Stomach (tissue), 19 donors: ENCODE measurements at regions of chr10 and their contacts with region 1.

Region 1: GRCh38 chr10:28663576-28664313 is 13.6 kb upstream of the BAMBI start:
- DNase-seq: peak; percentile 77 to 94
- H3K4me3 ChIP-seq: no peak overlapping the region
- H3K27ac ChIP-seq: no peak overlapping the region
- H3K4me1 ChIP-seq: peaks cover 4 to 16% (median 11%) of the 10 kb centered on the region in 4 donors
- H3K27me3 ChIP-seq: peaks cover 0 to 45% (median 15%) of the 10 kb centered on the region in 3 donors
- CTCF ChIP-seq: peak in 5 of 7 experiments; percentile 83 to 95 (median 92)
- EP300 ChIP-seq: no peak
- POLR2A ChIP-seq: no peak

Region 2: DNA sequence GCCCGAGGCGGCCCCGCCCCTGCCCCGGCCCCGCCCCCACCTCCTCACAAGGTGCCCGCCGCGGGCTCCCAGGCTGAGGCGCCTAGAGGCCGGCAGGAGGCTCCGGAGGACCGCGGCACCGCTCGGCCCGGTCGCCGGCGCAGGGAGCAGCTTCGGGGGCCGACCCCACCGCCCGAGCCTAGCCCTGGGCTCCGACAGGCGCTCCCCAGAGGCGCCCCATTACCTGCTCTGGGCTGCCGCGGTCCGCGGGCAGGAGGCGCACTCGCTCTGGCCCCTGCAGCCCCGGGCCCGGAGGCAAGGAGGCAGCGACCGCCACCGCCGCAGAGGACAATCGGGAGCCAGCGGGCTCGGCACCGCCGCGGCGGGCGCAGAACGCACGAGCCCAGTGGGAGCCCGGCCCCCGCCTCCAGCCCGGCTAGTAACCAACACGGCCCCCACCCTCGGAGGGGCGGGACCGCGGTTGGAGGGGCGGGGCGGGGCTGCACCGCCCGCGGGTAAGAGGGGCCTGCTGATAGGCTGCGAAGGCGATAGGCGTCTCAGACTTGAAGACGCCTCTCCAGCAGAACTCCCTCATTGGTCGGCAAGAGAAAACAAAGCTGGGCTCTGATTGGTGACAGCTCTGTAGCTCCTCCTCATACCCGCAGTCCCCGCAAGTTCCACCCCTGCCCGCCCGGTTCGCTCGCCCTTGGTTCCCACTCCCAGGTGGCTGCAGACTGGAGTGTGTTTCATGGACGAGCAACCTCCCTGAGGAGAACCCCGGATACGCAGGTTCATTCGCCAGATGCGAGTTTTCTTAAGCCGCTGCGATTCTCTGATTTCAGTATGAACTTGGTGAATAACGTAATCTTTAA is 360.9 kb before region 1 on chr10 and contains the start of gene MPP7:
- intact Hi-C with region 1: no loop called
- DNase-seq: peak; percentile 97 to 99
- H3K4me3 ChIP-seq: peak within 1 kb of the TSS; percentile 71 to 93 (median 88)
- H3K27ac ChIP-seq: peak within 1 kb of the TSS; percentile 92 to 99 (median 93)
- H3K4me1 ChIP-seq: peaks cover 7 to 39% (median 18%) of the 10 kb centered on the region in 4 donors
- H3K27me3 ChIP-seq: no peaks in the 10 kb centered on the region
- CTCF ChIP-seq: peak in 5 of 7 experiments; percentile 6 to 51 (median 27)
- EP300 ChIP-seq: no peak
- POLR2A ChIP-seq: no peak
- total RNA-seq, gene MPP7: 11.2 to 42.0 (median 27.2) TPM

Region 3: GRCh38 chr10:28991326-28992270 is 327.9 kb after region 1 on chr10:
- intact Hi-C with region 1: loop called (anchors 5 kb)
- DNase-seq: peak; percentile 42 to 64
- H3K4me3 ChIP-seq: no peak overlapping the region
- H3K27ac ChIP-seq: no peak overlapping the region
- H3K4me1 ChIP-seq: peaks cover 0 to 6% (median 0%) of the 10 kb centered on the region in 4 donors
- H3K27me3 ChIP-seq: no peaks in the 10 kb centered on the region
- CTCF ChIP-seq: peak in 5 of 7 experiments; percentile 41 to 85 (median 58)
- EP300 ChIP-seq: no peak
- POLR2A ChIP-seq: no peak

Region 4: GRCh38 chr10:29304264-29305030 is 640.7 kb after region 1 on chr10:
- intact Hi-C with region 1: loop called (anchors 5 kb)
- DNase-seq: peak; percentile 57 to 88
- H3K4me3 ChIP-seq: no peak overlapping the region
- H3K27ac ChIP-seq: no peak overlapping the region
- H3K4me1 ChIP-seq: no peaks in the 10 kb centered on the region
- H3K27me3 ChIP-seq: no peaks in the 10 kb centered on the region
- CTCF ChIP-seq: peak in 5 of 7 experiments; percentile 61 to 82 (median 72)
- EP300 ChIP-seq: no peak
- POLR2A ChIP-seq: no peak